ENCODE measurements at regions of chr3 and their contacts with region 1.

Region 1: DNA sequence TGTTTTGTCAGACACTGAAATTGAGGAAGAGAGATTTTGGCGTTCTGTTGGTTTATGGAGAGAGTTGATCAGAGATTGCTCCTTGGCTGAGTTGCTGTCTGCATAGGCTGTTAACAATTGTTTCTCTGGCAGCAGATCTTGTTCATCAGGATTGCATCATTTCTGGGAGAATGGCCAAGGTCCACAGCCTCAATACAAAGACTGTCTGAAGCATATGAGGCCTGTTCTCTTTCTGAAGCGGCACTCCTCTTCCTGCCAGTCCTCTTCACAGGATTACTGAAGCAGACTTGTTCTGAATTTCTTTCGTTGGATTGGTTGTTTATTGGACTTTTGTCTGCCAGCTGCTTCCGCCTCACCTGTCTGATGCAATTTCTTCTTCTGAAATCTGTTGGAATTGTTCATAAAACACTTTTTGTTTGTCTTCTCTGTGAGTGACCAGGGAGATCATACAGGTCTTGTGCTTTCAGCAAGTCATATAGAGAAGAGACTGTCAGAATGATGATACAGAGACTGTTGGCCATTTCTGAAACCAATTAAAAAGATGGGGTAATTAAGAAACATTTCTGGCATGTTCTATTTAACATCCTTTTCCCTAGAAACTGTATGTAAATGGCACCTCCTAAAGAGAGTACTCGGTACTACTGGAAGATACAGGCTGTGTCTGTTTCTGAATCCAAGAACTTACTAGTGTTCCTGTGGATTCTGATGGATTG is 25.5 kb downstream of the SETD5 start:
- DNase-seq: no peak
- H3K4me3 ChIP-seq: no peak overlapping the region
- H3K27ac ChIP-seq: peak overlapping the region; percentile 45
- H3K4me1 ChIP-seq: peaks cover 5% of the 10 kb centered on the region
- CTCF ChIP-seq: peak; percentile 61

Region 2: GRCh38 chr3:7813365-7813764 is 1609.5 kb before region 1 on chr3:
- CTCF ChIA-PET with region 1: no interaction called
- POLR2A ChIA-PET with region 1: no interaction called
- intact Hi-C with region 1: no loop called
- DNase-seq: no peak
- H3K4me3 ChIP-seq: no peak overlapping the region
- H3K27ac ChIP-seq: no peak overlapping the region
- H3K4me1 ChIP-seq: no peaks in the 10 kb centered on the region
- CTCF ChIP-seq: no peak

Region 3: GRCh38 chr3:9330166-9330703 is 92.6 kb before region 1 on chr3:
- CTCF ChIA-PET with region 1: no interaction called
- POLR2A ChIA-PET with region 1: no interaction called
- intact Hi-C with region 1: no loop called
- DNase-seq: no peak
- H3K4me3 ChIP-seq: no peak overlapping the region
- H3K27ac ChIP-seq: no peak overlapping the region
- H3K4me1 ChIP-seq: no peaks in the 10 kb centered on the region
- CTCF ChIP-seq: no peak

Region 4: GRCh38 chr3:9915254-9916141 is 492.6 kb after region 1 on chr3:
- CTCF ChIA-PET with region 1: no interaction called
- POLR2A ChIA-PET with region 1: interaction called, 11 read pairs
- intact Hi-C with region 1: no loop called
- DNase-seq: no peak
- H3K4me3 ChIP-seq: no peak overlapping the region
- H3K27ac ChIP-seq: no peak overlapping the region
- H3K4me1 ChIP-seq: no peaks in the 10 kb centered on the region
- CTCF ChIP-seq: no peak